Activated CD8-positive, alpha-beta T cell treated with anti-CD3 and anti-CD28 coated beads, Interleukin-2, amount 10 ng/mL, durations not matched to agents 7 days and 5 days (primary cell): ENCODE measurements at regions of chr7 and their contacts with region 1.

Region 1: GRCh38 chr7:100632951-100633717 is 8.2 kb downstream of the TFR2 start:
- DNase-seq: peak; percentile 68
- ATAC-seq: peak; percentile 69
- H3K4me3 Mint-ChIP-seq: peak overlapping the region; percentile 83
- H3K27ac Mint-ChIP-seq: peak overlapping the region; percentile 88
- H3K4me1 Mint-ChIP-seq: peaks cover 46% of the 10 kb centered on the region
- H3K27me3 Mint-ChIP-seq: peaks cover 5% of the 10 kb centered on the region

Region 2: GRCh38 chr7:100369105-100369504 is 264.0 kb before region 1 on chr7:
- CTCF ChIA-PET with region 1: no interaction called
- POLR2A ChIA-PET with region 1: no interaction called
- DNase-seq: no peak
- ATAC-seq: no peak
- H3K4me3 Mint-ChIP-seq: no peak overlapping the region
- H3K27ac Mint-ChIP-seq: peak overlapping the region; percentile 87
- H3K4me1 Mint-ChIP-seq: peaks cover 68% of the 10 kb centered on the region
- H3K27me3 Mint-ChIP-seq: no peaks in the 10 kb centered on the region

Region 3: DNA sequence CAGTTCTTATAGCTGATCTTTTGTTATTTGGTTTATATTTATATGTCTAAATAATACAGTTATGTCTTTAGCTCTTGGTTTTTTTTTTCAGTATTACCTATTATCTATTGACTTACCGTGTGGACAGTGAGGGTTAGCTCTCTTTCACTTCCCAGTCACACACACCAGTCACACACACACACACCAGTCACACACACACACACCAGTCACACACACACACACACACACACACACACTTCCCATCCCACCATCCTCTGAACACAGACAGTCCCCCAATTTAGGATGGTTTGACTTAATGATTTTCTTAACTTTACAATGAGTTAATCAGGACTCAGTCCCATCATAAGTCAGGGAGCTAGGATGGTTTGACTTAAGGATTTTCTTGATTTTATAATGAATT is 113.0 kb before region 1 on chr7:
- CTCF ChIA-PET with region 1: no interaction called
- POLR2A ChIA-PET with region 1: no interaction called
- DNase-seq: no peak
- ATAC-seq: no peak
- H3K4me3 Mint-ChIP-seq: no peak overlapping the region
- H3K27ac Mint-ChIP-seq: no peak overlapping the region
- H3K4me1 Mint-ChIP-seq: peaks cover 23% of the 10 kb centered on the region
- H3K27me3 Mint-ChIP-seq: no peaks in the 10 kb centered on the region

Region 4: GRCh38 chr7:100611974-100612729 is 21.0 kb before region 1 on chr7 and contains the start of gene MOSPD3:
- CTCF ChIA-PET with region 1: interaction called, 25 read pairs
- POLR2A ChIA-PET with region 1: interaction called, 8 read pairs
- DNase-seq: peak; percentile 98
- ATAC-seq: peak; percentile 94
- H3K4me3 Mint-ChIP-seq: peak within 1 kb of the TSS; percentile 95
- H3K27ac Mint-ChIP-seq: peak within 1 kb of the TSS; percentile 99
- H3K4me1 Mint-ChIP-seq: peaks cover 30% of the 10 kb centered on the region
- H3K27me3 Mint-ChIP-seq: peaks cover 6% of the 10 kb centered on the region
- total RNA-seq, gene MOSPD3: 42.1 to 43.5 TPM

Region 5: GRCh38 chr7:100673300-100673941 is 40.3 kb after region 1 on chr7 and contains the start of gene GNB2:
- CTCF ChIA-PET with region 1: interaction called, 10 read pairs
- POLR2A ChIA-PET with region 1: no interaction called
- DNase-seq: peak; percentile 99
- ATAC-seq: peak; percentile 69
- H3K4me3 Mint-ChIP-seq: peak within 1 kb of the TSS; percentile 96
- H3K27ac Mint-ChIP-seq: peak within 1 kb of the TSS; percentile 96
- H3K4me1 Mint-ChIP-seq: peaks cover 26% of the 10 kb centered on the region
- H3K27me3 Mint-ChIP-seq: peaks cover 10% of the 10 kb centered on the region
- total RNA-seq, gene GNB2: 274 to 286 TPM